ENCODE measurements at regions of chr2 and their contacts with region 1.

Region 1: GRCh38 chr2:56183643-56184499 is at the start of gene CCDC85A:
- DNase-seq: peak; percentile 70
- ATAC-seq: peak; percentile 70
- H3K4me3 ChIP-seq: peak within 1 kb of the TSS in 3 of 5 experiments; percentile 30 to 64 (median 51)
- H3K4me3 Mint-ChIP-seq: peak within 1 kb of the TSS; percentile 69
- H3K27ac ChIP-seq: no peak within 1 kb of the TSS
- H3K27ac Mint-ChIP-seq: no peak within 1 kb of the TSS
- H3K4me1 ChIP-seq: peaks cover 14 to 16% of the 10 kb centered on the region in 2 donors
- H3K4me1 Mint-ChIP-seq: peaks cover 12% of the 10 kb centered on the region
- H3K27me3 ChIP-seq: peaks cover 0 to 41% (median 18%) of the 10 kb centered on the region in 4 experiments
- H3K27me3 Mint-ChIP-seq: peaks cover 69% of the 10 kb centered on the region
- CTCF ChIP-seq: peak; percentile 76
- total RNA-seq, gene CCDC85A: not detected in 2 replicates

Region 2: DNA sequence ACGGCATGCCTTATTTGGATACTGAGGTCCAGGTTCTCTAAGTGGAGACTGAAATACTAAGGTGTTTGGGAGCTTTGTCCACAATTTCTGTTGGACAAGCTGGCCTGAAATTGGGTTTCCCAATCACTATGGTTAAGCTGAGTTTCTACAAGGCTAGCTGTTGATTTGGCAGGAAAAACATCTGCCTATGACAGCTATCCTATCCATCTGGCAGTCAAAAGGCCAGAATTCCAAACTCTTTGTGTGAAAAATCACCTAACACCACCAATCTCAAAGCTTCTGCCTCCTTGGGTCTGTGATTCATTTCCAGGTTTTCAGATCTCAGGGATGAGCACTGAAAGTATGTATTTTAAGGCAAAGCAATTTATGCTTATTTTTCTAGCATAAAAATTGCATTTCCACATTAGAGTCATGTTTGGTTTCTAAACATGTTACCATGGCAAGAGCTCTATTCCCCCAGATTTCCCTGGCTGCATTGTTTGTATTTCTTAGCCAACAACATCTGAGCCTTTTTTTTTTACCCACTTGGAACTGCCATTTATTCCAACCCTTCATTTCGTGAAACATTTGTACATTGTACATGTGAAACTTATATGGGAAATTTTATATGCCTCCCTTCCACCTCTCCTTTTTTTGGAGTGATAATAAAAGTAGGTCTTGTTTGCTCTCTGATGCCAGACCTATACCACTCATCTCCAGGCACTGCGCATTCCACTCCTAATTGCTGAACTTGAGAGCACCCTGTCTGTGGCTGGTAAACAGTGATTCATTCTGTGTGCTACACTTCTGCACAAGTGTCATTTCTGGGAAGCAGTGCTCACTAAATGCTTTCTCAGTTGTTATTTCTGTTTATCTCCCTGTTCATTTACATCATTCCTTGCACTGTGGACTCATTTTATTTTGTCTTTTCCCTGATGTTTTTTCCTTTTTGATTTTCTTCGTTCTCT is 16.0 kb before region 1 on chr2:
- CTCF ChIA-PET with region 1: interaction called, 12 read pairs
- POLR2A ChIA-PET with region 1: no interaction called
- intact Hi-C with region 1: no loop called
- DNase-seq: no peak
- ATAC-seq: no peak
- H3K4me3 ChIP-seq: no peak overlapping the region
- H3K4me3 Mint-ChIP-seq: no peak overlapping the region
- H3K27ac ChIP-seq: no peak overlapping the region
- H3K27ac Mint-ChIP-seq: no peak overlapping the region
- H3K4me1 ChIP-seq: no peaks in the 10 kb centered on the region
- H3K4me1 Mint-ChIP-seq: no peaks in the 10 kb centered on the region
- H3K27me3 ChIP-seq: peaks cover 0 to 2% (median 0%) of the 10 kb centered on the region in 4 experiments
- H3K27me3 Mint-ChIP-seq: peaks cover 13% of the 10 kb centered on the region
- CTCF ChIP-seq: no peak

Region 3: DNA sequence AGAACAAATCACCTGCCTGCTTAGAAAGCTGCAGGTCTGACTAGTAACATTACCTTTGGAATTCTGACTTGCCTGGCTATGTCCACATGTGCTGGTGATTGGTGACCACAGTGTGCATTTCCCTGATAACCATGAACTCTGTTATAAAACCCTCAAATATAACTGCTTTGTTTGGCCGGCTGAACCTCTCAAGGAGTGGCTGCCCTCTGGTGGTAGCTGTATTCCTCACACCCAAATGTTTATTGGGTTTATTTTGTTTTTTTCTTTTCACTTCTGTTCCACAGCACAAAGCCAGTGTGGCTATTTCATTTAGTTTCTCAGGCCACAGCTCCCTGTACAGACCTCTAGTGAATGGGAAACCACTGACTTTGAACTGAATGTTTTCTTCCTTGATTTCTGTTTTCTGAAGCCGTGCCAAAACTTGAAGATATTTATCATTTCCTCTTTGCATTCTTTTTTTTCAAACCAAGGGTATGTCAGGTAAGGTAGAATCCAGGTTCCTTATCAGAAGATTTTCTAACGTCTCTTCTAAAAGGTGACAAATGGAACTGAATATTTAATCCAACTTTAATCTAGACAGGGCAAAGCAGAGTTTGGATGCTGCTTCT is 1313.7 kb after region 1 on chr2:
- CTCF ChIA-PET with region 1: interaction called, 4 read pairs
- POLR2A ChIA-PET with region 1: no interaction called
- intact Hi-C with region 1: loop called (anchors 5 kb)
- DNase-seq: peak; percentile 38
- ATAC-seq: peak; percentile 33
- H3K4me3 ChIP-seq: no peak overlapping the region
- H3K4me3 Mint-ChIP-seq: no peak overlapping the region
- H3K27ac ChIP-seq: no peak overlapping the region
- H3K27ac Mint-ChIP-seq: no peak overlapping the region
- H3K4me1 ChIP-seq: no peaks in the 10 kb centered on the region
- H3K4me1 Mint-ChIP-seq: peaks cover 2% of the 10 kb centered on the region
- H3K27me3 ChIP-seq: no peaks in the 10 kb centered on the region
- H3K27me3 Mint-ChIP-seq: peaks cover 9% of the 10 kb centered on the region
- CTCF ChIP-seq: peak; percentile 82

Region 4: DNA sequence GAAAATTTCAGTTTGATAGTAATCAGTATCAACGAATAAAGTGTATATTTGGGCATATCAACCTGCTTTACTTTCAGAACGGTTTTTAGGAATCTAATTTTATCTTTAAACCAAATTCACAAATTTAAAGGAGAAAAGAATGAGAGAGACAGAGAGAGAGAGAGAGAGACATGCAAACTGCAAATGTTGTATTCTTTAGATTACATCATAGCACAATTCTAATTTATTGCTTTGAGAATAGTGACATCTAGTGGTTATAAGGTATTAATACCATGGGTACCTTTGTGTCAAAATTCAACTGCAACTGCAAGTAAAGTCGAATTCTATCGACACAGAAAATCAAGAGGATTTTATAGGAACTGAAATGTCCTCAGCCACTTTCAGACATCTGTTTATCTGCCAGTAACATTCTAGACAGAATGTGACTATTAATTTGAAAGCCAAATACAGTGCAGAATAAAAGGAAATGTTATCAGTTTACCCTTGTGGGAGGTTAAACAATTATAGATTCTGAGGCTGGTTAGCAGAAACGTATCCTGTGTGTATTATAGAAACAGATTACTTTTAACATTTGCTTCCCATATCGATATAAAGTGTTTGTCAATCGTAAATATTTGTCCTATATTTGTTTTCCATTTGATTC is 1332.9 kb after region 1 on chr2:
- CTCF ChIA-PET with region 1: interaction called, 15 read pairs
- POLR2A ChIA-PET with region 1: no interaction called
- intact Hi-C with region 1: no loop called
- DNase-seq: peak; percentile 41
- ATAC-seq: peak; percentile 47
- H3K4me3 ChIP-seq: no peak overlapping the region
- H3K4me3 Mint-ChIP-seq: no peak overlapping the region
- H3K27ac ChIP-seq: no peak overlapping the region
- H3K27ac Mint-ChIP-seq: no peak overlapping the region
- H3K4me1 ChIP-seq: no peaks in the 10 kb centered on the region
- H3K4me1 Mint-ChIP-seq: no peaks in the 10 kb centered on the region
- H3K27me3 ChIP-seq: no peaks in the 10 kb centered on the region
- H3K27me3 Mint-ChIP-seq: no peaks in the 10 kb centered on the region
- CTCF ChIP-seq: peak; percentile 81

Measured in B cell (primary cell).